ENCODE measurements at regions of chr12 and their contacts with region 1.

Region 1: DNA sequence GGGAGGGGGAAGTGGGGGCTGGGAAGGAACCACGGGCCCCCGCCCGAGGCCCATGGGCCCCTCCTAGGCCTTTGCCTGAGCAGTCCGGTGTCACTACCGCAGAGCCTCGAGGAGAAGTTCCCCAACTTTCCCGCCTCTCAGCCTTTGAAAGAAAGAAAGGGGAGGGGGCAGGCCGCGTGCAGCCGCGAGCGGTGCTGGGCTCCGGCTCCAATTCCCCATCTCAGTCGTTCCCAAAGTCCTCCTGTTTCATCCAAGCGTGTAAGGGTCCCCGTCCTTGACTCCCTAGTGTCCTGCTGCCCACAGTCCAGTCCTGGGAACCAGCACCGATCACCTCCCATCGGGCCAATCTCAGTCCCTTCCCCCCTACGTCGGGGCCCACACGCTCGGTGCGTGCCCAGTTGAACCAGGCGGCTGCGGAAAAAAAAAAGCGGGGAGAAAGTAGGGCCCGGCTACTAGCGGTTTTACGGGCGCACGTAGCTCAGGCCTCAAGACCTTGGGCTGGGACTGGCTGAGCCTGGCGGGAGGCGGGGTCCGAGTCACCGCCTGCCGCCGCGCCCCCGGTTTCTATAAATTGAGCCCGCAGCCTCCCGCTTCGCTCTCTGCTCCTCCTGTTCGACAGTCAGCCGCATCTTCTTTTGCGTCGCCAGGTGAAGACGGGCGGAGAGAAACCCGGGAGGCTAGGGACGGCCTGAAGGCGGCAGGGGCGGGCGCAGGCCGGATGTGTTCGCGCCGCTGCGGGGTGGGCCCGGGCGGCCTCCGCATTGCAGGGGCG is at the start of gene GAPDH:
- DNase-seq: peak; percentile 78 to 93 (median 86)
- H3K4me3 ChIP-seq: peak within 1 kb of the TSS; percentile 92
- H3K4me3 Mint-ChIP-seq: peak within 1 kb of the TSS; percentile 89 to 97 (median 93)
- H3K27ac ChIP-seq: peak within 1 kb of the TSS; percentile 95
- H3K27ac Mint-ChIP-seq: peak within 1 kb of the TSS; percentile 96 to 99 (median 98)
- H3K4me1 ChIP-seq: peaks cover 59% of the 10 kb centered on the region
- H3K4me1 Mint-ChIP-seq: peaks cover 49 to 57% (median 52%) of the 10 kb centered on the region in 3 donors
- H3K27me3 ChIP-seq: no peaks in the 10 kb centered on the region
- H3K27me3 Mint-ChIP-seq: peaks cover 0 to 5% of the 10 kb centered on the region in 2 donors
- total RNA-seq, gene GAPDH: 7,182 to 7,238 TPM

Region 2: DNA sequence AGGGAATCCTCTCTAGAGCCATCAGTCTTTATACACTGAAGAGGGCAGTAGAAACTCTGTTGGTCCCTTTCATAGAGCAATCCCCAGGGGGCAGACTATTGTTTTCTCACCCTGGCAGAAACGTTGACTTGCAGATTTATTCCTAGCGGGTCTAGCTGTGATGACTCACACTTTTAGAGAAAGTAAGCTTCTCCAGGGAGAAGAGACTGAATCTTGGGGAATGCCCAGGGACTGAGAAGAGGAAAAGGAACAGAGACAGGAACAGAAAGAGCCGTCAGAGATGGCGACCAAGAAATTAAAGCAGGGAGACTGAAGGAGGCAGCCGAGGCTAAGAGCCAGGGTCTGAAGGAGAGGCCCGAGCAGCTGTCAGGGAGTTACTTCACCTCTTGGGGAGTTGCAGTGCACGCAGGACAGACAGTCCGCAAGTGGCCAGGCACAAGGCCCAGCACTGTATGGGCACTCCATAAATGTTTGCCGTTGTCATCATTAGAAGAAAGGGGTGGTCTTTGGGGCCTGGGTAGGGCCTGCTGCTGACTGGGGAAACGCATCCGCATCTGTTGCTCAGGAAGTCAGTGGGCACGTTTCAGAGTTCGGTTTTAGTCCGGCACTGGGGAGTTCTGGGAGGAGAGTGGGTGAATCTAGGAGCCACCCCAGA is 210.6 kb before region 1 on chr12:
- CTCF ChIA-PET with region 1: interaction called, 15 read pairs
- POLR2A ChIA-PET with region 1: no interaction called
- DNase-seq: peak in 4 of 5 donors; percentile 28 to 67 (median 52)
- H3K4me3 ChIP-seq: peak overlapping the region; percentile 22
- H3K4me3 Mint-ChIP-seq: peak overlapping the region; percentile 63 to 88 (median 83)
- H3K27ac ChIP-seq: no peak overlapping the region
- H3K27ac Mint-ChIP-seq: peak overlapping the region; percentile 81 to 96 (median 93)
- H3K4me1 ChIP-seq: peaks cover 34% of the 10 kb centered on the region
- H3K4me1 Mint-ChIP-seq: peaks cover 50 to 58% (median 55%) of the 10 kb centered on the region in 3 donors
- H3K27me3 ChIP-seq: no peaks in the 10 kb centered on the region
- H3K27me3 Mint-ChIP-seq: no peaks in the 10 kb centered on the region

Region 3: GRCh38 chr12:6443361-6443983 is 90.6 kb before region 1 on chr12:
- CTCF ChIA-PET with region 1: interaction called, 46 read pairs
- POLR2A ChIA-PET with region 1: interaction called, 4 read pairs
- DNase-seq: no peak
- H3K4me3 ChIP-seq: peak overlapping the region; percentile 41
- H3K4me3 Mint-ChIP-seq: peak overlapping the region; percentile 71 to 99 (median 97)
- H3K27ac ChIP-seq: no peak overlapping the region
- H3K27ac Mint-ChIP-seq: peak overlapping the region; percentile 78 to 99 (median 94)
- H3K4me1 ChIP-seq: peaks cover 32% of the 10 kb centered on the region
- H3K4me1 Mint-ChIP-seq: peaks cover 56 to 71% (median 68%) of the 10 kb centered on the region in 3 donors
- H3K27me3 ChIP-seq: no peaks in the 10 kb centered on the region
- H3K27me3 Mint-ChIP-seq: no peaks in the 10 kb centered on the region

Region 4: DNA sequence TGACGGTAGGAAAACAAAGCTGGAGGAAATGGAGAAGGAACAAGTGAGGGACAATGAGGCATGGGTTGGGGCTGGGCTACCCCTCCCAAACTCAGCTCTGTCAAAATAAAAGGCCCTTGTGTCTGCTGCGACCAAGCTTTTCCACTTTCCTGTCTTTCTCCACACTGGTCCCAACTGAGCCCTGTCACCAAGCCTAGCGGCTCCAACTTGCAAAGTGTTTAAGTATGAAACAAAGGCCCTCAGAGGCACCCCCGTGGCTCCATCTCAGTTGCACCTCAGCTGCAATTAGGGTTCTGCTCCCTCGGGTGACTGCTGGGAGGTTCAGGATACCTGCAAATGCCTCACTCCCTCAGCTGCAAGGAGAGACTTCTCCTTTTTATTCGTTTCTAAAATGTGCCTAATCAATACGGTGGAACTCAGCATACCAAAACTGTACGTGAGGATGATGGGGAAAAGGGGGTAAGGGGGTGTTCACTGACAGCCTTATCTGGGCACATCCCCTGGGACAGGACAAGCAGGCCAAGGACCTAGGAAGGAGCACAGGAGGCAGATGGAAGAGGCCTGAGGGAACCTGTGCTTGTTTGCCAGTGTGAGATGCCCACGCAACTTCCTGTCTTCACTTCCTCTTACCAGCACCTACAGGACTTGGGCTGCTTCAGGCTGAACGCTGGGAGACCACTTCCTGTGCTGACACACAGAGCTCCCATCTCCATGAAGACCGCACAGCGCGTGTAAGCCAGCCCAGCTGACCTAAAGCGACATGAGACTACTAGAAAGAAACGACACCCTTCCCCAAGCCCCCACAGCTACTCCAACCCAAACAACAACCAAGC is 72.5 kb before region 1 on chr12:
- CTCF ChIA-PET with region 1: interaction called, 56 read pairs
- POLR2A ChIA-PET with region 1: interaction called, 23 read pairs
- DNase-seq: peak; percentile 74 to 93 (median 87)
- H3K4me3 ChIP-seq: peak overlapping the region; percentile 46
- H3K4me3 Mint-ChIP-seq: peak overlapping the region; percentile 71 to 89 (median 83)
- H3K27ac ChIP-seq: peak overlapping the region; percentile 79
- H3K27ac Mint-ChIP-seq: peak overlapping the region; percentile 94 to 99 (median 99)
- H3K4me1 ChIP-seq: peaks cover 88% of the 10 kb centered on the region
- H3K4me1 Mint-ChIP-seq: peaks cover 75 to 89% (median 83%) of the 10 kb centered on the region in 3 donors
- H3K27me3 ChIP-seq: no peaks in the 10 kb centered on the region
- H3K27me3 Mint-ChIP-seq: peaks cover 0 to 2% of the 10 kb centered on the region in 2 donors

Region 5: GRCh38 chr12:6493497-6494257 is 40.4 kb before region 1 on chr12 and contains the start of gene NCAPD2:
- CTCF ChIA-PET with region 1: interaction called, 14 read pairs
- POLR2A ChIA-PET with region 1: interaction called, 16 read pairs
- DNase-seq: peak; percentile 91 to 97 (median 96)
- H3K4me3 ChIP-seq: peak within 1 kb of the TSS; percentile 93
- H3K4me3 Mint-ChIP-seq: peak within 1 kb of the TSS; percentile 87 to 99 (median 95)
- H3K27ac ChIP-seq: peak within 1 kb of the TSS; percentile 76
- H3K27ac Mint-ChIP-seq: peak within 1 kb of the TSS; percentile 88 to 99 (median 97)
- H3K4me1 ChIP-seq: peaks cover 28% of the 10 kb centered on the region
- H3K4me1 Mint-ChIP-seq: peaks cover 34 to 44% (median 43%) of the 10 kb centered on the region in 3 donors
- H3K27me3 ChIP-seq: no peaks in the 10 kb centered on the region
- H3K27me3 Mint-ChIP-seq: peaks cover 0 to 2% of the 10 kb centered on the region in 2 donors
- total RNA-seq, gene NCAPD2: 96.5 to 97.5 TPM

Region 6: DNA sequence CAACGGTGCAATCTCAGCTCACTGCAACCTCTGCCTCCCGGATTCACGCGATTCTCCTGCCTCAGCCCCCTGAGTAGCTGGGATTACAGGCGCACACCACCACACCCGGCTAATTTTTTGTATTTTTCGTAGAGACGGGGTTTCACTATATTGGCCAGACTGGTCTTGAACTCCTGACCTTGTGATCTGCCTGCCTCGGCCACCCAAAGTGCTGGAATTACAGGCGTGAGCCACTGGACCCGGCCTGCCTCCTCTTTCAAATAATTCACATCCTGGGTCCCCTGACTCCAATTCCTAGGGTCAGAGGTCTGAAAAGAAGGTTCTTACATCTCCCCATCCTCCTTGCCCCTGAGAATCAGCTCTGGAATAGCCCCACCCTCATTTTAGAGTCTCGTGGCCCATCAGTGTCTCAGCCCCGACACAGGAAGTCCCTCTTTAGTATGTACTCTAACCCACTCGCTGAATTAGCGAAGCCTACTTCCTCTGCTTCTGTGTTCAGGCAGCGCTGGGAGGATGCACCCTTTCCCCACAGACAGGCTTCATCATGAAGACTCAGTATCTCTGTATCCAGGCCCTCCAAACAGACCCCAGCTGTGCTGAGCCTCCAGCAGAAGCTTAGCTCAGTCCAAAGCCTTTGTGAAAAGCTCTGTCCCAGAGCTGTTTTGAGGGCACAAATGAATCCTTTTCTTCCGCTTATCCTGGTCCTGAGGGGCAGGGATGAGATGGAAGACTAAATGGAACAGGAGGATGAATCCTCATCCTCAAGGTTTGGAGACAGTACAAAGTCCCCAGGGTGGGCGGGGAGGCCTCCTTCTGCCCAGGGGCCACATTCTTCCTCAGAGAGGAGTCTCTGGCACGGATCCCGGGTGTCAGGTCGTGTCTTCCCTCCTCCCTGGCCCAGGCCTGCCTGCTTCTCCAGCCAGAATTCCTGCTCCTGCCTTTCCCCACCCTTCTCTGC is 98.2 kb after region 1 on chr12:
- CTCF ChIA-PET with region 1: no interaction called
- POLR2A ChIA-PET with region 1: no interaction called
- DNase-seq: peak; percentile 30 to 69 (median 56)
- H3K4me3 ChIP-seq: peak overlapping the region; percentile 67
- H3K4me3 Mint-ChIP-seq: peak overlapping the region; percentile 82 to 95 (median 92)
- H3K27ac ChIP-seq: peak overlapping the region; percentile 60
- H3K27ac Mint-ChIP-seq: peak overlapping the region; percentile 92 to 100 (median 98)
- H3K4me1 ChIP-seq: peaks cover 48% of the 10 kb centered on the region
- H3K4me1 Mint-ChIP-seq: peaks cover 64 to 74% (median 66%) of the 10 kb centered on the region in 3 donors
- H3K27me3 ChIP-seq: no peaks in the 10 kb centered on the region
- H3K27me3 Mint-ChIP-seq: no peaks in the 10 kb centered on the region